ENCODE measurements at regions of chr5 and their contacts with region 1.

Region 1: DNA sequence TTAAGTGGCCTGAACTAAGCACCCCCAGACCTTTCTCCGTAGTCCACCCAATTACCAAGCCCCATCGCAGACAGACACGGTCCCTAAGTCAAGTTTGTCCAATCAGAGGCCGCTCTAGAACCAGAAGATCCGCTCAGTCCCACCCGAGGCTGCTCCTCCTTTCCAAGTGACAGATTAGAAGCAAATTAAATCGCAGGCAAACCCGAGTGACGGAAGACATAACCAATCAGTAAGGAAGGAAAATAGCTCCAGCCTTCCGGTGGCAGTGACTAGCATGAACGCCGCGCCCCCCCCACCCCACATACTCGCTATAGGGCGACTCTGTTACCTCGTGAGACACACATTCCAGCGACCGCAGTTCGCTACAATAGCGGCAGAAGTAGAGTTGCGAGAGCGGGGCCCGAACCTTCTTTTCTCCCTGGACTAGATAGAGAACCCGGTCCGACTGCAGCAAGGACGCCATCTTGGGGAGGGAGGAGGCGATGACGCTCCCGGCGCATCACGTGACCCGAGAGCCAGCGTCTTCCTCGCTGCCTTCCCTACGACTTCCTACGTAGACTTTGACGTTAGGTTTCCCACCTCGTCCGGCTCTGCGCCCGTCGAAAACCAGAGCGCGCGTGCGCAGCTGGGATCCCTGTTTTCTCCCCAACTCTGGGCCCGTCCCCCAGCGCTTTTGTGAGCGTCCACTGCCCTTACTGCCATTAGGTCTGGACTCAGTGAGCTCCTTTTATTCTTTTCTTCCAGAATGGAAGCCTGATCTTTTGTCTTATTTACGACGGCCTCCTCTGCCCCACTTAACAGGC is at the start of gene DCTN4:
- DNase-seq: peak; percentile 99
- H3K4me3 ChIP-seq: peak within 1 kb of the TSS; percentile 57 to 69 (median 66)
- H3K27ac ChIP-seq: peak within 1 kb of the TSS; percentile 93 to 95 (median 94)
- H3K4me1 ChIP-seq: peaks cover 0 to 27% (median 15%) of the 10 kb centered on the region in 4 donors
- H3K27me3 ChIP-seq: no peaks in the 10 kb centered on the region
- CTCF ChIP-seq: no peak
- EP300 ChIP-seq: peak in 2 of 4 donors; percentile 29 to 79
- POLR2A ChIP-seq: peak; percentile 37 to 39
- total RNA-seq, gene DCTN4: 51.0 to 56.0 (median 53.7) TPM

Region 2: GRCh38 chr5:150700594-150701293 is 58.0 kb before region 1 on chr5 and contains the start of gene RBM22:
- intact Hi-C with region 1: loop called (anchors 2 kb)
- DNase-seq: peak; percentile 96
- H3K4me3 ChIP-seq: peak within 1 kb of the TSS; percentile 75 to 96 (median 92)
- H3K27ac ChIP-seq: peak within 1 kb of the TSS; percentile 94 to 98 (median 96)
- H3K4me1 ChIP-seq: peaks cover 0 to 22% (median 16%) of the 10 kb centered on the region in 4 donors
- H3K27me3 ChIP-seq: no peaks in the 10 kb centered on the region
- CTCF ChIP-seq: peak; percentile 52 to 73 (median 63)
- EP300 ChIP-seq: peak in 1 of 4 donors; percentile 18
- POLR2A ChIP-seq: peak; percentile 56 to 60
- total RNA-seq, gene RBM22: 30.0 to 34.1 (median 31.8) TPM